Activated naive CD4-positive, alpha-beta T cell treated with anti-CD3 and anti-CD28 coated beads for 36 hours (primary cell): ENCODE measurements at regions of chr2 and their contacts with region 1.

Region 1: DNA sequence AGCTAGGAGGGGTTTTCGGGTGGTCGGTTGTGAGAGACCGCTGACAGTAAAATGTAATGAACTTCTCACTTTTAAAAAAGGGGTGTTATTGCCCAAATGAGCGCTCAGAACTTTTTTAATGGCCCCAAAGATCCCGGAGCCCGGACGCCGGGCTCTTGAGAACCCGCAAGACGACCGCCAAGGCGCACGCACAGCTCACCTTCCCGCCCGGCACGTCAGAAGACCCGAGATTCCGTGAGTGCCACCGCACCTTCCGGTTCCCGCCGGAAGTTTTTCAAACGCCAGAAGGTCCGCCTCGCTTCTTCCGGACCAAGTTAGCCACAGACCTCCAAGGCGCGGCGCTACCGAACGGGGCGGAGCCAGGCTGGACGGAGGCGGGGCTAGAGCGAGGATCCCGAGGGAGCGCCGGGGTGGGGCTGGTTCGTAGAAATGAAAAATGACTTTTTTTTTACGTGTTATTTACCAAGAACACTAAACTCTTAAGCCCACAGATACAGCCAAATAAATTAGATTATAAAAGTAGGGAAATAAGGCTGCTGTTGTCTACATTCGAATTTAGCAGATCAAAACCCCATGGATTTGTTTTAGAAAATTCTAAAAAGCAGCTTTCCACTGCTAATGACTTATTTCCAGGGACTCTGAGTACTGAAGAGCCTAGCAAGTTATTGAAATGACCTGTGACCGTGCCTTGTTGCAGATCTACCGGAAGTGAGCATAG is at the start of gene SRBD1:
- DNase-seq: peak; percentile 96
- H3K4me3 Mint-ChIP-seq: peak within 1 kb of the TSS; percentile 98
- H3K27ac Mint-ChIP-seq: peak within 1 kb of the TSS; percentile 98
- H3K4me1 Mint-ChIP-seq: peaks cover 19% of the 10 kb centered on the region
- H3K27me3 Mint-ChIP-seq: no peaks in the 10 kb centered on the region
- total RNA-seq, gene SRBD1: 21.3 to 22.6 TPM

Region 2: GRCh38 chr2:45169339-45170190 is 441.6 kb before region 1 on chr2:
- CTCF ChIA-PET with region 1: no interaction called
- intact Hi-C with region 1: loop called (anchors 10 kb)
- DNase-seq: peak; percentile 9
- H3K4me3 Mint-ChIP-seq: peak overlapping the region; percentile 62
- H3K27ac Mint-ChIP-seq: no peak overlapping the region
- H3K4me1 Mint-ChIP-seq: peaks cover 10% of the 10 kb centered on the region
- H3K27me3 Mint-ChIP-seq: peaks cover 59% of the 10 kb centered on the region

Region 3: DNA sequence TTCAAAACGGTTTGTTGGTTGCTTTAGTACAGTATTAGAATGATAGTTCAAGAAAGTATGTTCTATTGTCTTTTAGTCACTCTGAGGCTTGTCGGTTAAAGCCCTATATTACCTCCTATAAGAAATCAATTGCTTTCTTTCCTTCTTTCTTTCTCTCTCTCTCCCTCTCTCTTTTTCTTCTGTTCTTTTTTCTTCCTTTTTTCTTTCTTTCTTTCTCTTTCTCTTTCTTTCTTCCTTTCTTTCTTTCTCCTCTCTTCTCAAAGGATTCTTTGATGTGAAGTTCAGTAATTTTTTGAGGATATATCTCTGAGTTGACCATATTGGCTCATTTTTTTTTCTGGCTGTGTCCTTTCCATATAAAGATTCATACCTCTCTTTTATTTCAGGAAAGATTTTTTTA is 249.5 kb before region 1 on chr2:
- CTCF ChIA-PET with region 1: no interaction called
- intact Hi-C with region 1: no loop called
- DNase-seq: no peak
- H3K4me3 Mint-ChIP-seq: no peak overlapping the region
- H3K27ac Mint-ChIP-seq: no peak overlapping the region
- H3K4me1 Mint-ChIP-seq: no peaks in the 10 kb centered on the region
- H3K27me3 Mint-ChIP-seq: no peaks in the 10 kb centered on the region

Region 4: GRCh38 chr2:45494269-45494977 is 116.8 kb before region 1 on chr2:
- CTCF ChIA-PET with region 1: interaction called, 4 read pairs
- intact Hi-C with region 1: loop called (anchors 1 kb)
- DNase-seq: no peak
- H3K4me3 Mint-ChIP-seq: no peak overlapping the region
- H3K27ac Mint-ChIP-seq: no peak overlapping the region
- H3K4me1 Mint-ChIP-seq: peaks cover 30% of the 10 kb centered on the region
- H3K27me3 Mint-ChIP-seq: no peaks in the 10 kb centered on the region

Region 5: DNA sequence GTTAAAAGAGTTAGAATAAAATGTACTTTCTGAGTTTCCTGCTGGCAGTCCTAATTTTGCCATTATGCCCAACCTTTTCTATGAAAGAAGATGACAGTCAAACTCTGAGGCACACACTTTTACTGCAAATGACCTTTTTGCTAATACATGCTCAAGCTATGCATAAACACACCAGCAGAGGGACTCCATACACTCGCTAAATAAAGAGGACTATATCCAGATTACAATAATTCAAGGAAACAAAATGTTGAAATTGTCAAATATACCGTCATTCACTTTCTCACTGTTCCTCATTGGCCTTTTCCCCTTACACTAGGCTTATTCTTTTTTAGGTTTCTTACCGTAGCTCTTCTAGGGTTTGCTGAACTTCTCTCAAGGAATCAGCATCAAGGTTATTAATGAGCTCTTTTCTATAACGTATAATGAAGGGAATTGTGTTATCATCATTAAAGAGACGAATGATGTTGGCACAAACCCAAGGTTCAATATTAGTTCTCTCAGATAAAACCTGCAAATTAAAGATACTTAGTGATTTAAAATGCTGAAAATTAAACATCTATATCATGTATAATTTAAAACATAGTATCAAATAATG is 25.8 kb before region 1 on chr2:
- CTCF ChIA-PET with region 1: interaction called, 6 read pairs
- intact Hi-C with region 1: loop called (anchors 1 kb)
- DNase-seq: peak; percentile 8
- H3K4me3 Mint-ChIP-seq: no peak overlapping the region
- H3K27ac Mint-ChIP-seq: no peak overlapping the region
- H3K4me1 Mint-ChIP-seq: peaks cover 17% of the 10 kb centered on the region
- H3K27me3 Mint-ChIP-seq: no peaks in the 10 kb centered on the region

Region 6: GRCh38 chr2:45650851-45651414 is 39.8 kb after region 1 on chr2:
- CTCF ChIA-PET with region 1: interaction called, 3 read pairs
- intact Hi-C with region 1: loop called (anchors 1 kb)
- DNase-seq: peak; percentile 93
- H3K4me3 Mint-ChIP-seq: peak overlapping the region; percentile 95
- H3K27ac Mint-ChIP-seq: peak overlapping the region; percentile 91
- H3K4me1 Mint-ChIP-seq: peaks cover 22% of the 10 kb centered on the region
- H3K27me3 Mint-ChIP-seq: peaks cover 3% of the 10 kb centered on the region